Ascending aorta (tissue), 2 donors: ENCODE measurements at regions of chr10 and their contacts with region 1.

Region 1: DNA sequence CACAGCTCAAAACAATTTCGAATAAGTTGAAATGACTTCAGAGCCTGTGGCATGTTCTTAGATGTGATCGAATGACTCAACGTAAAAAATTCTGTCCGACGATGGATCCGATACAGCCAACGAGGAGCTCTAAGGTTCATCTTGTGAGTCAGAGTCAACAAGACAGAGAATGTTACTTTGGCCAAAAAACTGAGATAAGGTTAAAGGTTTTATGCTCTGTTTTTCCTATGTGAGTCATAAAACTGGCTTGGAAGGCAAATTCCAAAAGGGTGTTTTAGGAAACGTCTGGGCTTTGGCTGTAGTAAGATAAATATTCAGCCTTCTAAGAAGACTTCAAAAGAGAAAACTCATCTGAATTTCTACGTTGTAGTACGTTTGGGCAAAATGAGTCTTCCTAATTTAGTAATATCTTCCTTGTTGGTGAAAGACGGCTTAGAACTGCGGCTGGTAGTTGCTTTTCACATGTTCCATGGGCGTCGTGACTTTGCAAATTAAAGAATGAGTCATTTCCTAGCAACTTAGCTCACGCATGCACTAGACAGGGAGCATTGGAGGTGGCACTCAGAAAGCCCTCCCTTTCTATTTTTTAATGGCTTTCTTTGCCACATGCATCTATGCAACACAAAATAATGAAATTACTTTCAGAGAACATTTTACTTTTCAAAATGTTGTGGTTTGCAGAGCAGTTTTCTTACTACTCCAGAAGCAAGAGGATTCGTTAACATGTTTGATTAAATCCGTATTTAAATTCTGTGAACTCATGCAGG is 28.2 kb downstream of the PFKP start:
- DNase-seq: peak in 1 of 2 donors; percentile 84
- H3K4me3 ChIP-seq: peak overlapping the region; percentile 7 to 56
- H3K27ac ChIP-seq: peak overlapping the region; percentile 88 to 90
- H3K4me1 ChIP-seq: peaks cover 17 to 33% of the 10 kb centered on the region in 2 donors
- H3K27me3 ChIP-seq: no peaks in the 10 kb centered on the region
- CTCF ChIP-seq: no peak

Region 2: DNA sequence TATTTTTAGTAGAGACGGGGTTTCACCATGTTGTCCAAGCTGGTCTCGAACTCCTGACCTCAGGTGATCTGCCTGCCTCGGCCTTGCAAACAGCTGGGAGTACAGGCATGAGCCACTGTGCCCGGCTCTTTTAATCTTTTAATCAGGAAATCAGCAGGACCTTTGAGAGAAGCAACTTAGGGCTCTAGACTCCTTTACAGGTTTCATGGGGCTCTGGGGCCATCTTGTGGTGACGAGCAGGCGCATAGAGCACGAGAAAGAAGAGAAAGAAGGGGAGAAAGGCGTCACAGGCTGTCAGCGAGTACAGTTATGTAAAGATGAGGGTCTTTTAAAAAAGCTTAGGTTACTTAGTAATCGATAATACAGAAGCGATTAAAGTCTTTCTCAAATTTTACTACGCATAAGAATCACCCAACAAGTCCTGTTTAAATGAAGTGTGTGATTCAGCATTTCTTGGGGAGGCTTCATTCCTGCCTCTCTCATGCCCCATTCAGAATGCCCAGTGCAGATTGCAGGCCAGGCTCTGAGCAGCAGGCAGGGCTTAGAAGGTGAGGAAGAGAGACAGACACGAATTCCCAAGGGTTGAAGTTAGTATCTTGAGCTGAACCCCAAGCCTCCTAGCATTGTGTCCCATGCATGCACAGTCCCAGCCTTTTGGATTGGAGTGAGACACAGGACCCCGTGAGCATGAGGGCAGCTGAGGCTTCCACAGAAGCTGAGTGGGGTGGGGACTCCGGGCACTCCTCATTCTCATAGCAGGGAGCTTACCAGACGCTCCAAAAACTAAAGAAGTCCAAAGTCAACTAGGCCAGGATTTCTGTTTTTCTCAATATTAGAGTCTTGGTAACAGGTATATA is 51.8 kb before region 1 on chr10:
- intact Hi-C with region 1: loop called (anchors 5 kb)
- DNase-seq: peak in 1 of 2 donors; percentile 84
- H3K4me3 ChIP-seq: no peak overlapping the region
- H3K27ac ChIP-seq: peak overlapping the region; percentile 37 to 69
- H3K4me1 ChIP-seq: peaks cover 8 to 27% of the 10 kb centered on the region in 2 donors
- H3K27me3 ChIP-seq: no peaks in the 10 kb centered on the region
- CTCF ChIP-seq: peak; percentile 74 to 88 (median 82)

Region 3: GRCh38 chr10:3107426-3107961 is 11.9 kb after region 1 on chr10:
- intact Hi-C with region 1: loop called (anchors 1 kb)
- DNase-seq: peak; percentile 84 to 98
- H3K4me3 ChIP-seq: peak overlapping the region in 1 of 2 donors; percentile 26
- H3K27ac ChIP-seq: peak overlapping the region; percentile 88 to 95
- H3K4me1 ChIP-seq: peaks cover 12 to 38% of the 10 kb centered on the region in 2 donors
- H3K27me3 ChIP-seq: no peaks in the 10 kb centered on the region
- CTCF ChIP-seq: no peak